PC-9 (cell line): ENCODE measurements at regions of chr5 and their contacts with region 1.

Region 1: DNA sequence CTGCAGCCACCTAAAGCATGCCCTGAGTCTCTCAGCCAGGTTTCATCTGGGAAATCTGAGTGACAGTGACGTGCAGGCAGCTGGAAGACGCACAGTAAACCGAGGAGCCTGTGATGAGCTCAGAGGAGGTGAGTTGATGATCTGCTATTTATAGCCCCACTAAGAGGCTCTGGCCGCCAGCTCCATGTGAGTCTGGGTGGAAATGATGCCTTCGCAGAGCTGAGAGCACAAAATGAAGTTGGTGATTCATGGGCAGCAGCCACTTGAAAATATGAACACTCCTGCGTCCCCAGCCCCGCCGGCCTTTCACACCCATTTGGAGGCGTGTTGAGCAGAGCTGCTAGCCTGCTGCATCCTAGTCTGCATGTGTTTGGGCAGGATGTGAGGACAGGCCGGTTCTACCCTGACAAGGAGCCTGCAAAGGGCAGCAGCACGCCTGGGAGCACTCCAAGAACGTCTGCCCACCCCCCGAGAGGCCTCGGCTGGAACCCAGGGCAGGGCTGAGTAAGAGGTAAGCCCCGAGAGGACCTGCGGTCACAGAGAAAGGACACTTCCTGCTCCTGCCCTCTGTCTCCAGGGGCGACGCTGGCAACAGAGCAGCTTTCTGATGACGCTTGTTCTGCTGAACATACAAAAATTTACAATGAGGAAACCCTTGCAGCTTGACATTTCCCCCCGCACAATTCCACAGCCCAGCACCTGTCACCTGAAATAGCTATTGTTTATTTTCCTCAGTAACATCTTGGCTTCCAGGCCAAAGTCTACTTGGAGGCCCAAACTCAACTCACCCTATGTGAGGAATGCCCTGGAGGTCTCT is 25.1 kb upstream of the CDKN2AIPNL start:
- DNase-seq: peak; percentile 84 to 91
- H3K4me3 ChIP-seq: peak overlapping the region; percentile 47; the same call in 1 of the 2 replicates
- H3K27ac ChIP-seq: peak overlapping the region; percentile 80
- H3K4me1 ChIP-seq: peaks cover 61% of the 10 kb centered on the region
- H3K27me3 ChIP-seq: no peaks in the 10 kb centered on the region
- CTCF ChIP-seq: no peak

Region 2: GRCh38 chr5:134411546-134412266 is 25.0 kb before region 1 on chr5 and contains the start of gene CDKN2AIPNL:
- CTCF ChIA-PET with region 1: no interaction called
- POLR2A ChIA-PET with region 1: interaction called, 10 read pairs
- intact Hi-C with region 1: loop called (anchors 1 kb)
- DNase-seq: peak; percentile 65 to 89
- H3K4me3 ChIP-seq: peak within 1 kb of the TSS; percentile 98
- H3K27ac ChIP-seq: no peak within 1 kb of the TSS
- H3K4me1 ChIP-seq: peaks cover 16% of the 10 kb centered on the region
- H3K27me3 ChIP-seq: no peaks in the 10 kb centered on the region
- CTCF ChIP-seq: peak; percentile 60
- total RNA-seq, gene CDKN2AIPNL: 35.3 and 36.1 TPM in 2 replicates

Region 3: DNA sequence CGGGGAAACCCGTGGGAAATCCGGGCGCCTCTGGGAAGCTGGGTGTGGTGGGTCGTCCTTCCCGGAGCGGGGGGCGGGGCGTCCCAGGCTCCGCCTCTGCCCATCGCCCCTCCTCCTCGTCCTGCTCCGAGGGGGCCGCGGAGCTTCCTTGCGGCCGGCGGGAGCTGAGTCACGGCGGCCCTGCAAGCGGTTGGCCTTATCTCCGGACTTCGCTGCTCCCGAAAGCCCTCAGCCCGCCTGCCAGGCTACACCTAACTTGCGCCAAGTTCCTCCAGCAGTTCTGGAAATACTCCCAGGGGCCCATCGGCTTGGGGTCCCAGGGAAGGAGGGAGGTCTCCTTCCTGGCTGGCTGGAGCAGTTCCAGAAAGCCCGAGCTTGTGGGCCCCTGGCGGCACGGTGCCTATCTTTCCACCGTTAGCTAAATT is 29.1 kb after region 1 on chr5:
- CTCF ChIA-PET with region 1: no interaction called
- POLR2A ChIA-PET with region 1: no interaction called
- intact Hi-C with region 1: loop called (anchors 1 kb)
- DNase-seq: peak; percentile 77 to 90
- H3K4me3 ChIP-seq: peak overlapping the region; percentile 58
- H3K27ac ChIP-seq: peak overlapping the region; percentile 85
- H3K4me1 ChIP-seq: peaks cover 25% of the 10 kb centered on the region
- H3K27me3 ChIP-seq: no peaks in the 10 kb centered on the region
- CTCF ChIP-seq: no peak

Region 4: DNA sequence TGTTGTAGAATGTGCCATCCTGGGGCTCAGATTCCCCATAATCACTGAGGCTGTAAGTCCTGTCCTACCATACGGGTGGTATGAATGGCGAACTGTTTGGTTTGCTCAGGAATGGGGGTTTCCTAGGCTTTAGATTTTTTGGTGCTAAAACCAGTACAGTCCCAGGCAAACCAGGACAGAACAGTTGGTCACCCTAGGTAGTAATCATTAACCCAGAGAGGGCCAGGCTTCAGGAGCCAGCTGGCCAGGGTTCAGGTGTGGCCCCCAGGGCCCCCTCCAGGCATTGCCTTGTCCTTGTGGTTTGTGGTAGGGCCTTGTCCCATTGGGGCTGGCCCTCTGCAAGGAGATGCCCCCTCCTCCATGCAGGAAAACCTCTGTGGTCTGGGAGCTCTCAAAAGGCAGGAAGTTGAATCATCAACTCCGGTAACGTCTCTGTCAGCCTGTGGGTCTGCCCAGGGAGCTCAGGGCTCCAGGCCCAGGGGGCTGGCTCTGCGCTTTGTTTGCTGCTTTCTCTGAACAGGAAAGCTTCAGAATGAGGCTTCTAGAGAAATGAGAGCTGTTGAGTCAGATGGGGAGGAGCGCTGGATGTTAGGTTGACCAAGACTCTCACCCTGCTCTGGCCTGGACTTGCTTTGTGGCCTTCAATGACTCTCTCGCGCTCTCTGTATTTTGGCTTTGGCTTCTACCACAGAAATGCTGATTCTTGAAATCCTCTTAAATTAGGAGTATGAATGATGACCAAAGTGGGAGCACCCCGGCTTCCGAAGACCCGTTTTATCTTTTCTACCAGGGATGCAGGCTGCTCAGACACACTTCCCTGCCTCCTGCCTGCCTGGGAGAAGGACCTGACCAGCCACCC is 66.6 kb after region 1 on chr5:
- CTCF ChIA-PET with region 1: interaction called, 6 read pairs
- POLR2A ChIA-PET with region 1: no interaction called
- intact Hi-C with region 1: loop called (anchors 1 kb)
- DNase-seq: peak; percentile 85 to 91
- H3K4me3 ChIP-seq: no peak overlapping the region
- H3K27ac ChIP-seq: peak overlapping the region; percentile 86
- H3K4me1 ChIP-seq: peaks cover 69% of the 10 kb centered on the region
- H3K27me3 ChIP-seq: no peaks in the 10 kb centered on the region
- CTCF ChIP-seq: no peak

Region 5: DNA sequence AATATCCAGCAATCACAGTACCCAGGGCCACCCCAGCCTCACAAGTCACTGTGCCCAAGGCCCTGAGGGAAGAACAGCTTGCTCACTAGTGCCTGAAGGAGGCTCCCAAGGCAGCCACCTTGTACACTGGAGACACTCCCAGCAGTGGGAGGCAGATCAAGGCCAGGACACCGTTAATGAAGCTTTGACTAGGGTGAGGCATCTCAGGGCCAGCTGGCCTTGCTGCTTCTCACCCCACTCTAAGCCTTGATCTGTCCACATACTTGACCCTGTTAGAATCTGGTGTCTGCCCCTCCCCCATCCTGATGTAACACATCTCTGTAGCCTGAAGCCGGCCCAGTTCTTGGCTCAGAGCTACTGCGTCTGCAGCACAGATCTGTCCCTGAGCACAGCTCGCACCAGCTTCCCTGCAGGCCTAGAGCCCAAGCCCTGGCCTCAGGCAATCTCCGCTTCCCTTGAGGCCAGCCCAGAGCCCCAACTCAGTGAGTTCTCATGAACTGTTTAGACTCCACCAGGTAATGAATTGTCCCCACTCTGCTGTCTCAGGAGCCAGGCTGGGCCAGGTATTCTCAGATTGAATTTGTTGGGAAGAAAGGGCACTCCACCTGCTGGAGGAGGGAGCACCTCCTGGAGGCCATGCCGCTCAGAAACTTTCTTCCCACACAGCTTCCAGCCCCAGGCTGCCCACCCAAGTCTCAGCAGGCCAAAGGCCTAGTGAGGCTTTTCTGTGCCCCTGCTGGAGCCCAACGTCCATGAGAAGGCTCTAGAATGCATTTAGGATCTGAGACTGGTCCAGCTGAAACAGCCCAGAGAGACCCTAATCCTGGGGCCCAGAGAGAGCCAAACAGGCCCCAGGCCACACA is 75.3 kb after region 1 on chr5:
- CTCF ChIA-PET with region 1: no interaction called
- POLR2A ChIA-PET with region 1: no interaction called
- intact Hi-C with region 1: loop called (anchors 1 kb)
- DNase-seq: peak; percentile 73
- H3K4me3 ChIP-seq: peak overlapping the region; percentile 43; the same call in 1 of the 2 replicates
- H3K27ac ChIP-seq: peak overlapping the region; percentile 92
- H3K4me1 ChIP-seq: peaks cover 64% of the 10 kb centered on the region
- H3K27me3 ChIP-seq: no peaks in the 10 kb centered on the region
- CTCF ChIP-seq: peak; percentile 67

Region 6: DNA sequence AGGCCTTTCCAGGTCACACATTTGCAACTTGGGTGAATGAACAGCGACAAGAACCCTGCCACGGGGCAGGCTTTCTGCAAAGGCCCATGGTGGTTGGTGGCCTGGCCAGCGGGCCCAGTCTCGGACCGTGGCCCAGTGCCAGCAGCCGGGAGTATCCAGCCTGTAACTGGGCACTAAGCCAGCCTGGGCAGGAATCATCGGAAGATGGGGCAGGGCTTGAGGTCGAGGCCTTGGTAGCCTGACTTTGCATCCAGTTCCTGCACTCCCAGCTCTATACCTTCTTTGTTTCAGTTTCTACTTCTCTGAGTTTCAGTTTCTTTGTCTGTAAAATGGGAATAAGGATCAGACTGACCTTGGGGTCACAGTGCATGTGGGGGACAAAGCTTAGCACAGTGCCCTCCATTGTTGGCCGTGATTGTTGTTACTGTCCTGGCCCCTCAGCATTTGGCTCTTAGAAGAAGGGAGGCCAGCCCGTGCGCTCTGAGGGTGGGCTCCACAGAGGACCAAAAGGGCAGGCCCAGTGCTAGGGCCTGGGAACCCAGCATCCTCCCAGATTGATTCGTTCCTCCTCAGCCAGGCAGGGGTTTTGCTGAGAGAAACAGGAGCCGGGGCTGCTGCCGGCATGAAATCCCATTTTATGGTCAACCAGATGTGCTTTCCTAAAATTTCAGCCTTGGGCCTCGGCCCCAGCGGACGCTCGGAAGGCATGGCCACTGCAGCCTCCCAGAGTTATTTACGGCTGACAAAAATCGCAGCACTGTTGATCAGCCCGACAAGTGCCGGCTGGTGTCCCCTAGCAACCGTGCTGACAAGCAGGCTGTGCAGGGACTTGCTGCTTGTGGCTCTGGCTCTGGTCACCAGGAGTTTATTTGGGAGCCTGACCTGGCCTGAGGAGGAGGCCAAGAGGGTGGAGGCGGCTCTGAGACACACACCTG is 132.3 kb after region 1 on chr5:
- CTCF ChIA-PET with region 1: no interaction called
- POLR2A ChIA-PET with region 1: no interaction called
- intact Hi-C with region 1: loop called (anchors 5 kb)
- DNase-seq: peak in 1 of 2 experiments; percentile 85
- H3K4me3 ChIP-seq: no peak overlapping the region
- H3K27ac ChIP-seq: no peak overlapping the region
- H3K4me1 ChIP-seq: no peaks in the 10 kb centered on the region
- H3K27me3 ChIP-seq: no peaks in the 10 kb centered on the region
- CTCF ChIP-seq: no peak